HepG2 (cell line): ENCODE measurements at regions of chr12 and their contacts with region 1.

Region 1: GRCh38 chr12:105235732-105236476 is at the start of gene APPL2:
- DNase-seq: peak; percentile 83
- ATAC-seq: peak; percentile 96
- H3K4me3 ChIP-seq: peak within 1 kb of the TSS; percentile 79 to 96 (median 84)
- H3K27ac ChIP-seq: peak within 1 kb of the TSS; percentile 89
- H3K4me1 ChIP-seq: peaks cover 59% of the 10 kb centered on the region
- H3K27me3 ChIP-seq: peaks cover 0 to 1% of the 10 kb centered on the region in 2 experiments; a peak in 2 of 5 replicates
- CTCF ChIP-seq: peak; percentile 51; the same call in 1 of the 2 replicates
- EP300 ChIP-seq: no peak
- POLR2A ChIP-seq: peak; percentile 81 to 91
- RAD21 ChIP-seq: peak; percentile 71
- total RNA-seq, gene APPL2: 9.9 and 10.5 TPM in 2 replicates

Region 2: GRCh38 chr12:105067511-105068031 is 168.3 kb before region 1 on chr12:
- CTCF ChIA-PET with region 1: no interaction called
- POLR2A ChIA-PET with region 1: no interaction called
- in situ Hi-C with region 1: no loop called
- intact Hi-C with region 1: no loop called
- DNase-seq: no peak
- ATAC-seq: no peak
- H3K4me3 ChIP-seq: no peak overlapping the region
- H3K27ac ChIP-seq: no peak overlapping the region
- H3K4me1 ChIP-seq: no peaks in the 10 kb centered on the region
- H3K27me3 ChIP-seq: no peaks in the 10 kb centered on the region
- CTCF ChIP-seq: no peak
- EP300 ChIP-seq: no peak
- POLR2A ChIP-seq: no peak
- RAD21 ChIP-seq: no peak

Region 3: GRCh38 chr12:105317942-105318621 is 82.2 kb after region 1 on chr12:
- CTCF ChIA-PET with region 1: no interaction called
- POLR2A ChIA-PET with region 1: interaction called, 6 read pairs
- in situ Hi-C with region 1: no loop called
- intact Hi-C with region 1: loop called (anchors 5 kb)
- DNase-seq: peak; percentile 90
- ATAC-seq: peak; percentile 84
- H3K4me3 ChIP-seq: peak overlapping the region in 1 of 3 experiments; percentile 8; a peak in 2 of 6 replicates
- H3K27ac ChIP-seq: peak overlapping the region; percentile 71
- H3K4me1 ChIP-seq: peaks cover 59% of the 10 kb centered on the region
- H3K27me3 ChIP-seq: no peaks in the 10 kb centered on the region
- CTCF ChIP-seq: no peak
- EP300 ChIP-seq: no peak; a peak in 2 of 4 replicates
- POLR2A ChIP-seq: no peak
- RAD21 ChIP-seq: no peak

Region 4: DNA sequence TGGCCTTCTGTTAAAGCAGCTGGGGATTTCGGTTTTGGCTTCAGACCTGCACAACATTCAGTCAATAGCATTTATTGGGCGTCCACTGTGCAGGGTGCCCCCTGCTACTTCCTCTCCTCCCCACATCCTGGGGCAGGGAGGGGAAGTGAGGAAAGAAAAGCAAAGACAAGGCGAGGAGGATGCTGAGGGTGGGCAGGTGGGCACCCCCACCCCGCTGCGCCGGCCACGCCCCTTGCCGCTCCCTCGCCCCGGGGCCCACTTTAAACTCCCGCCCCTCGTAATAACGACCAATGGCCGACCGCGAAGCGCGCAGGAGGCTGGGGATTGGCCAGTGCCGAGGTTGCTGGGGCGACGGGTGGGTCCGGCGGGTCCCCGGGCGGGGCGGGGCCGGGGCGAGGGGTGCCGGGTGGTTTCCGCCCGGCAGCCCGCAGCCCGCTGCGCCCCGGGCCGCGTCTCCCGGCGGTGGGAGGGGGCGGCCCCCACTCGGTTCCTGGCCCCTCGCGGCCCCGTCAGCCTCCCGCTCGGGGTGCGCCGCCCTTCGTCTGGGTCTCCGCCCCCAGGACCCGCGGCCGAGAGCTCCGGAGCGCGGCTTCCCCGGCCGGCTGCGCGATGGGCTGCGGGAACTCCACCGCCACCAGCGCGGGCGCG is 94.5 kb after region 1 on chr12 and contains the start of gene C12orf75:
- CTCF ChIA-PET with region 1: no interaction called
- POLR2A ChIA-PET with region 1: interaction called, 3 read pairs
- in situ Hi-C with region 1: no loop called
- intact Hi-C with region 1: loop called (anchors 5 kb)
- DNase-seq: peak; percentile 67
- ATAC-seq: peak; percentile 96
- H3K4me3 ChIP-seq: peak within 1 kb of the TSS; percentile 73 to 81 (median 81)
- H3K27ac ChIP-seq: no peak within 1 kb of the TSS
- H3K4me1 ChIP-seq: peaks cover 18% of the 10 kb centered on the region
- H3K27me3 ChIP-seq: no peaks in the 10 kb centered on the region
- CTCF ChIP-seq: no peak
- EP300 ChIP-seq: no peak
- POLR2A ChIP-seq: no peak
- RAD21 ChIP-seq: no peak
- total RNA-seq, gene C12orf75: 10.1 and 16.1 TPM in 2 replicates

Region 5: DNA sequence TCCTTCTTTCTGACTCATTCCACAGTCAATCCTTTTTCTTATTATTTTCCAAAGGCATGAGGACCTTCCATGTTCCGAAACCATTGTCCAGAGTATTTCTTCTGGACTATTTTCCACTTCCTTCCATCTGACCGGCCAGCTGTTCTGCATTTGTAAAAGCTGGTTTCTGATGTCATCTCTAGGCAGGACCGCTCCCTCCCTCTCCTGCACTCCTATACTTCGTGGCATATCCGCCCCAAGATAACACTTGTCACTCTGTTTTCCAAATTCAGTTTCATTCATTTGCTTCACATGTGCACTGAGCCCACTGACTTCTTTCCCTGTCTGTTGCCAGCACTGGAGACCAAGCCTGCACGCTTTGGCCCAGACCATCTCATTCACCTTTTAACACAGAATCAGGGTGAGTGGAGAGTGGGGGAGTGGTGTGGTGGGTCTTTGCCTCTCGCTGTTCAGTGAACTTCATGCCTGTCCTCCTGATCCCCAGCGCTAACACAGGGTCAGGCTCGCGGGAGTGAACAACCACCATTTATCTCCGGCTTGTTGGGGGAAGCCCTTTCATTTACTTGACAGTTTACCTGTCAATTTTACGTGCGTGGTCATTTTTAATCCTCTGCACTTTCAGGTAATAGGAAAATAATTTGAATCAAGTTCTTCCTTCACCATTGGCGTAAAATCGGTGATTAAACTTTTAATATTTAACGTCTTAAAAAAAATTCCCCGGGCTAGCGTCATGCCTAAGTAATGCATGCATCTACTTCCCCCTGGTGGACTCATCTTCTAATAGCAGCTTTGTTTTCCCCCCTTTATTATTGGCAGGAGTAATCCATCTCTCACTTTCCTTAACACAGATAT is 147.1 kb after region 1 on chr12:
- CTCF ChIA-PET with region 1: no interaction called
- POLR2A ChIA-PET with region 1: no interaction called
- in situ Hi-C with region 1: no loop called
- intact Hi-C with region 1: loop called (anchors 5 kb)
- DNase-seq: peak; percentile 55
- ATAC-seq: peak; percentile 77
- H3K4me3 ChIP-seq: peak overlapping the region in 2 of 3 experiments; percentile 26 to 50; a peak in 3 of 6 replicates
- H3K27ac ChIP-seq: no peak overlapping the region
- H3K4me1 ChIP-seq: peaks cover 7% of the 10 kb centered on the region
- H3K27me3 ChIP-seq: no peaks in the 10 kb centered on the region
- CTCF ChIP-seq: peak; percentile 78
- EP300 ChIP-seq: no peak
- POLR2A ChIP-seq: no peak
- RAD21 ChIP-seq: peak; percentile 78